Activated CD4-positive, alpha-beta memory T cell treated with anti-CD3 and anti-CD28 coated beads, Interleukin-2, amount 10 ng/mL, durations not matched to agents 7 days and 5 days (primary cell): ENCODE measurements at regions of chr1 and their contacts with region 1.

Region 1: GRCh38 chr1:84996846-84997666 is at the start of gene MCOLN2:
- DNase-seq: peak; percentile 66
- H3K4me3 Mint-ChIP-seq: peak within 1 kb of the TSS; percentile 79
- H3K27ac Mint-ChIP-seq: peak within 1 kb of the TSS; percentile 76
- H3K4me1 Mint-ChIP-seq: peaks cover 50% of the 10 kb centered on the region
- H3K27me3 Mint-ChIP-seq: peaks cover 25% of the 10 kb centered on the region
- total RNA-seq, gene MCOLN2: 27.2 to 28.2 TPM

Region 2: GRCh38 chr1:84427520-84428188 is 569.4 kb before region 1 on chr1:
- CTCF ChIA-PET with region 1: no interaction called
- POLR2A ChIA-PET with region 1: no interaction called
- DNase-seq: no peak
- H3K4me3 Mint-ChIP-seq: no peak overlapping the region
- H3K27ac Mint-ChIP-seq: no peak overlapping the region
- H3K4me1 Mint-ChIP-seq: peaks cover 2% of the 10 kb centered on the region
- H3K27me3 Mint-ChIP-seq: no peaks in the 10 kb centered on the region

Region 3: GRCh38 chr1:84834419-84835064 is 162.5 kb before region 1 on chr1:
- CTCF ChIA-PET with region 1: no interaction called
- POLR2A ChIA-PET with region 1: no interaction called
- DNase-seq: no peak
- H3K4me3 Mint-ChIP-seq: no peak overlapping the region
- H3K27ac Mint-ChIP-seq: no peak overlapping the region
- H3K4me1 Mint-ChIP-seq: peaks cover 16% of the 10 kb centered on the region
- H3K27me3 Mint-ChIP-seq: no peaks in the 10 kb centered on the region

Region 4: GRCh38 chr1:84959294-84959693 is 37.8 kb before region 1 on chr1:
- CTCF ChIA-PET with region 1: interaction called, 3 read pairs
- POLR2A ChIA-PET with region 1: interaction called, 29 read pairs
- DNase-seq: peak; percentile 59
- H3K4me3 Mint-ChIP-seq: no peak overlapping the region
- H3K27ac Mint-ChIP-seq: no peak overlapping the region
- H3K4me1 Mint-ChIP-seq: peaks cover 23% of the 10 kb centered on the region
- H3K27me3 Mint-ChIP-seq: peaks cover 5% of the 10 kb centered on the region

Region 5: DNA sequence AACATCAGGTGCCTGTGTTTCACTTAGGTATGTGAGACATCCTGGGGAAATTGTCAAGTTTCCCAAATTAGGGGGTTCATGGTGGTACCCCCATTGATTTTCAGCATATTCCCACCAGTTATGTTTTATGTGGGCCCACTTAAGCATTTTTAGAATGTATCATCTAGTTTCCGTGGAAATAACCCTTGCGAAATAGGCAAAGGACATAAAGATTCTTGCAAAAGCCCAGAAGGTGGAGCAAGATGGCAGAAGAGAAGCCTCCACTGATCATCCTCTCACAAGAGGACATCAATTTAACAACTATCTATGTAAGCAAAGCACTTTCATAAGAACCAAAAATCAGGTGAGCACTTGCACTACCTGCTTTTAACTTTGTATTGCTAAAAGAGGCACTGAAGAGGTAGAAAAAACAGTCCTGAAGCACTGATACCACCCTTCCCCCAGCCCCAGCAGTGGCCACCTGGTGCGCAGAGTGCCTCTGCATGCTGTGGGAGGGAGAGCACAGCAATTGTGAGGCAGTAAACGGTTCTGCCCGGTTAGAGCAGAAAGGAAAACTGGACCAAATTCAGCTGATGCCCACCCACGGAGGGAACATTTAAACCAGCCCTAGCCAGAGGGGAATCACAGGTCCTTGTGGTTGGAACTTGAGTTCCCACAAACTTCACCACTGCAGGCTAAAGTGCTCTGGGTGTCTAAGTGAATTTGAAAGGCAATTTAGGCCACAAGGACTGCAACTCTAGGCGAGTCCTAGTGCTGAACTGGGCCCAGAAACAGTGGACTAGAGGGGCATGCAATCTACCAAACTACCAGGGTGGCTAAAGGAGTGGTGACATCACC is 23.3 kb before region 1 on chr1:
- CTCF ChIA-PET with region 1: interaction called, 13 read pairs
- POLR2A ChIA-PET with region 1: interaction called, 34 read pairs
- DNase-seq: no peak
- H3K4me3 Mint-ChIP-seq: no peak overlapping the region
- H3K27ac Mint-ChIP-seq: peak overlapping the region; percentile 93
- H3K4me1 Mint-ChIP-seq: peaks cover 77% of the 10 kb centered on the region
- H3K27me3 Mint-ChIP-seq: no peaks in the 10 kb centered on the region

Region 6: DNA sequence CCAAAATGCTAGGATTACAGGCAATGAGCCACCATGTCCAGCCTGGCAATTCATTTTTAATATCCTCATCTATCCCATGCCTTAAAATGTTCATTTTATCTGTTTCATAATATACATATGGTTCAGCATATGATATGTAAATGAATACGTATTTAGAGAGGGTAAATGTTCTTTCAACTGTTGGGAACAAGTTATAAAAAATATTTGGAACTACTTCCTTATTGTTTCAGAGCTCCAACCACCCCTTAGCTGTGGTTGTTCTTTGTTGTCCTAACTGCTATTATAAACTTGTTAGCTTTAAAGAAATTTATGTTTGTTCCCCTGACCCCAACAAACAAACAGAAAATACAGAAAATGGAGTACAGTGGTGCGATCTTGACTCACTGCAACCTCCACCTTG is 14.7 kb before region 1 on chr1:
- CTCF ChIA-PET with region 1: interaction called, 3 read pairs
- POLR2A ChIA-PET with region 1: interaction called, 11 read pairs
- DNase-seq: no peak
- H3K4me3 Mint-ChIP-seq: no peak overlapping the region
- H3K27ac Mint-ChIP-seq: no peak overlapping the region
- H3K4me1 Mint-ChIP-seq: peaks cover 34% of the 10 kb centered on the region
- H3K27me3 Mint-ChIP-seq: no peaks in the 10 kb centered on the region

Region 7: DNA sequence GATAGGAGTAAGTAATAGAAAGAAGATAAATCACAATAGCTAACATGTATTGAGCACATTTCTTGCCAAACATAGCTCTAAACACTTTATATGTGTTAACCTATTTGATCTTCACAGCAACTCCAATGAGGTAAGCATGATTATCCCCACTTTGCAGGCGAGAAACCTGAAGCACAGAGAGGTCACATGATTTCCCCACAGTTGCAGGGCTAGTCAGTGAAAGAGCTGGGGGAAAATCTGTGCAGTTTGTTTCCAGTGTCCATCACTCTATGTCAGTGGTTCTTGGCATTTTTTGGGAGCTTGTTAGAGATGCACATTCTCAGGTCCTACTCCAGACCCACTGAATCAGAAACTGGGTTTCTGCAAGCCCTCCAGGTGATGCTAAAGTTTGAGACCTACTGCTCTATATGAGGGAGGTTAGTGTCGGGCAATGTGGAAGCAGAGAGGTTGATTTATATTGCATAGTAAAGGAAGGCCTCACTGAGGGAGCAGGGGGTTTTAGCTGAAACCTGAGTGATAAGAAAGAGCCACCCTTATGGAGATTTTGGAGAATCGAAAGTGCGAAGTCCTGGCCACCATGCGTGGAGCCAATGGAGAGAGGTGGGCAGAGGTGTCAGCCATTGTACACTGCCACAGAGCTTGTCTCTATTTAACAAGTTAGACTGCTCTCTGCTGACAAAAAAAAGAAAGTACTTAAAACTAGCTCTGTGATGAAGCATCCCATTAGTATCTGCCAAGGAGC is 30.4 kb after region 1 on chr1:
- CTCF ChIA-PET with region 1: interaction called, 10 read pairs
- POLR2A ChIA-PET with region 1: interaction called, 10 read pairs
- DNase-seq: peak; percentile 24
- H3K4me3 Mint-ChIP-seq: peak overlapping the region; percentile 5
- H3K27ac Mint-ChIP-seq: peak overlapping the region; percentile 17
- H3K4me1 Mint-ChIP-seq: peaks cover 9% of the 10 kb centered on the region
- H3K27me3 Mint-ChIP-seq: no peaks in the 10 kb centered on the region

Region 8: GRCh38 chr1:85276215-85276977 is 279.3 kb after region 1 on chr1 and contains the start of gene BCL10:
- CTCF ChIA-PET with region 1: no interaction called
- POLR2A ChIA-PET with region 1: interaction called, 11 read pairs
- DNase-seq: peak; percentile 99
- H3K4me3 Mint-ChIP-seq: peak within 1 kb of the TSS; percentile 80
- H3K27ac Mint-ChIP-seq: peak within 1 kb of the TSS; percentile 80
- H3K4me1 Mint-ChIP-seq: peaks cover 53% of the 10 kb centered on the region
- H3K27me3 Mint-ChIP-seq: peaks cover 26% of the 10 kb centered on the region
- total RNA-seq, gene BCL10: 24.3 to 30.1 TPM